Caco-2 (cell line): ENCODE measurements at regions of chr16 and their contacts with region 1.

Region 1: DNA sequence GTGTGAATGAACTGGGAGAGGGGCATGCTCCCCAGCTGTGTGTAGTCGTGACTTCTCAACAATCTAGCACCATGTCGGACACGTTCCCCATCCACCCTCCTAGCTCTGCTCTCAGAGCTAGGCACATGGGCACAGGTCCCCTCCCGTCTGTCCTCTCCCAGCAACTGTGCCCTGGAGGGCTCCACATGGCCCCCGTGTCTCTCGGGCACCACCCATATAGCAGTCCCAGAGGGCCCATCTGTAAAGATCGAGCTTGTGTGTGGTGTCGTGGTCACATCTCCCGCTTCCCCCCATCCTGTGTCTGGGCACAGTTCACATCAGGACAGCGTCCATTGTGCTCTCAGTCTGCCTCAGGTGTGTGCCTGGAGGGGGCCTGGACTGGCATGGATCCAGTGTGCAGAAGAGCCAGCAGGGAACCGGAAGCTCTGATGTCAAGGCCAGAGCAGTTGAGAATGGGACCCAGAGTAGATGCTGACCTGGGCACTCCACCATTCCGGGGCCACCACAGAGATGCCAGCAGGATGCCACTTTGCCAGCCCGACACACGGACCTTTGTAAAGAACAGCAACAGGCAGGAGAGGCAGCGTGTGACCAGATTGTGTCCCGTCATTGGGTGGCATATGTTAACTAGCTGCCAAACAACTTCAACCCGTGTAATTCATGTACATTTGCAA is 55.7 kb downstream of the MARF1 start:
- DNase-seq: no peak
- H3K4me3 ChIP-seq: no peak overlapping the region
- H3K4me3 Mint-ChIP-seq: no peak overlapping the region
- H3K27ac Mint-ChIP-seq: no peak overlapping the region
- H3K4me1 ChIP-seq: peaks cover 11% of the 10 kb centered on the region
- H3K4me1 Mint-ChIP-seq: peaks cover 13% of the 10 kb centered on the region
- H3K27me3 ChIP-seq: no peaks in the 10 kb centered on the region
- H3K27me3 Mint-ChIP-seq: no peaks in the 10 kb centered on the region
- CTCF ChIP-seq: no peak

Region 2: GRCh38 chr16:15548482-15548891 is 38.8 kb before region 1 on chr16:
- CTCF ChIA-PET with region 1: no interaction called
- POLR2A ChIA-PET with region 1: no interaction called
- intact Hi-C with region 1: no loop called
- DNase-seq: no peak
- H3K4me3 ChIP-seq: no peak overlapping the region
- H3K4me3 Mint-ChIP-seq: no peak overlapping the region
- H3K27ac Mint-ChIP-seq: no peak overlapping the region
- H3K4me1 ChIP-seq: no peaks in the 10 kb centered on the region
- H3K4me1 Mint-ChIP-seq: peaks cover 10% of the 10 kb centered on the region
- H3K27me3 ChIP-seq: no peaks in the 10 kb centered on the region
- H3K27me3 Mint-ChIP-seq: no peaks in the 10 kb centered on the region
- CTCF ChIP-seq: no peak

Region 3: DNA sequence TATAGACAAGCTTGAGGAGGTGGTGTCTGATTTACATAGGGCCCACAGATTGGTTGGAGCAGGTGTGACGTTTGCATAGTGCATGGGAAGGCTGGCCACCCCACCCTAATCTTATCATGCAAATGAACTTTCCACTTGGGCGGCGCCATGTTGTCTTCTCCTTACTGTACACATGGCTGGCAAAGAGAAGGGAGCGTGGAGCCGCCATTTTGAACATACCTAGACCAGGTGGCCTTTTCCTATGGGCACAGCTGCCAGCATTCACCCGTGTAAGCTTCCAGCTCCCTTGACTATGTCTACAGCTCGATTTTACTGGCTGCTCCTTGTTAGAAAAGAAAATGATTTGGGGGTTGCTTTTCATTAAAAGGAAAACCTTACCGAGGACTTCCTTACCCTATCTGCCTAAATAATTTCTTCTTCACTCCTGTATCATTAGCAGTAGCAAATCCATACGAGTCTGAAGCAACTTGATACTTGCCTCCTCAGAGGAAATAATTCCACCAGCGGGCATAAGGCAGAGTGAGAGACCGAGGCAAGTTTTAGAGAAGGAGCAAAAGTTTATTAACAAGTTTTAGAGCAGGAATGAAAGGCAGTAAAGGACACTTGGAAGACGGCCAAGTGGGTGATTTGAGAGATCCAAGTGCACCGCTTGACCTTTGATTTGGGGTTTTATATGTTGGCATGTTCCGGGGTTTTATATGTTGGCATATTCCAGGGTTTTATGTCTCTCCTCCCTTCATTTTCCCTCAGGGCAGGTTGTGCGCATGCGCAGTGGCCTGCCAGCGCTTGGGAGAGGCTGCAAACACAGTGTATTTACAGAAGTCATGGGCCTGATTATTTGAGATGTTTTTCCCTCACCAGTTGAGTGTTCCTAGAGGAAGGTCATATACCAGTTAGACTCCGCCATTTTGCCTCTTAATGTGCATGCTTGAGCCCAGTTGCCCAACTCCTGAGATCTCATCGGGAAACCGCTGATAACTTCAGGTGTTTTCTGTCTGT is 10.0 kb before region 1 on chr16:
- CTCF ChIA-PET with region 1: no interaction called
- POLR2A ChIA-PET with region 1: no interaction called
- intact Hi-C with region 1: loop called (anchors 1 kb)
- DNase-seq: peak; percentile 20 to 53
- H3K4me3 ChIP-seq: no peak overlapping the region
- H3K4me3 Mint-ChIP-seq: no peak overlapping the region
- H3K27ac Mint-ChIP-seq: no peak overlapping the region
- H3K4me1 ChIP-seq: peaks cover 7% of the 10 kb centered on the region; the same call in 1 of the 2 replicates
- H3K4me1 Mint-ChIP-seq: no peaks in the 10 kb centered on the region
- H3K27me3 ChIP-seq: no peaks in the 10 kb centered on the region
- H3K27me3 Mint-ChIP-seq: no peaks in the 10 kb centered on the region
- CTCF ChIP-seq: no peak

Region 4: GRCh38 chr16:15757630-15758251 is 170.5 kb after region 1 on chr16:
- CTCF ChIA-PET with region 1: no interaction called
- POLR2A ChIA-PET with region 1: no interaction called
- intact Hi-C with region 1: loop called (anchors 5 kb)
- DNase-seq: no peak
- H3K4me3 ChIP-seq: no peak overlapping the region
- H3K4me3 Mint-ChIP-seq: no peak overlapping the region
- H3K27ac Mint-ChIP-seq: no peak overlapping the region
- H3K4me1 ChIP-seq: no peaks in the 10 kb centered on the region
- H3K4me1 Mint-ChIP-seq: no peaks in the 10 kb centered on the region
- H3K27me3 ChIP-seq: no peaks in the 10 kb centered on the region
- H3K27me3 Mint-ChIP-seq: peaks cover 8% of the 10 kb centered on the region
- CTCF ChIP-seq: no peak